Activated T-helper 2 cell treated with anti-CD3 and anti-CD28 coated beads, Interferon-gamma antibody, Interleukin-2, Interleukin-4, amounts not matched to agents 10 μg/mL and 5 μg/mL and 100 μg/mL, durations not matched to agents 14 hours and 24 hours and 36 hours (primary cell): ENCODE measurements at regions of chr1 and their contacts with region 1.

Region 1: GRCh38 chr1:53326088-53326597 is 1.7 kb downstream of the LRP8 start:
- DNase-seq: peak; percentile 94
- H3K4me3 Mint-ChIP-seq: peak overlapping the region; percentile 96
- H3K27ac Mint-ChIP-seq: peak overlapping the region; percentile 93
- H3K4me1 Mint-ChIP-seq: peaks cover 30% of the 10 kb centered on the region
- H3K27me3 Mint-ChIP-seq: no peaks in the 10 kb centered on the region

Region 2: GRCh38 chr1:52726265-52727113 is 599.7 kb before region 1 on chr1 and contains the start of gene ZYG11B:
- intact Hi-C with region 1: loop called (anchors 5 kb)
- DNase-seq: peak; percentile 87
- H3K4me3 Mint-ChIP-seq: peak within 1 kb of the TSS; percentile 93
- H3K27ac Mint-ChIP-seq: peak within 1 kb of the TSS; percentile 70
- H3K4me1 Mint-ChIP-seq: peaks cover 25% of the 10 kb centered on the region
- H3K27me3 Mint-ChIP-seq: no peaks in the 10 kb centered on the region
- total RNA-seq, gene ZYG11B: 12.7 and 13.2 TPM in 2 replicates

Region 3: DNA sequence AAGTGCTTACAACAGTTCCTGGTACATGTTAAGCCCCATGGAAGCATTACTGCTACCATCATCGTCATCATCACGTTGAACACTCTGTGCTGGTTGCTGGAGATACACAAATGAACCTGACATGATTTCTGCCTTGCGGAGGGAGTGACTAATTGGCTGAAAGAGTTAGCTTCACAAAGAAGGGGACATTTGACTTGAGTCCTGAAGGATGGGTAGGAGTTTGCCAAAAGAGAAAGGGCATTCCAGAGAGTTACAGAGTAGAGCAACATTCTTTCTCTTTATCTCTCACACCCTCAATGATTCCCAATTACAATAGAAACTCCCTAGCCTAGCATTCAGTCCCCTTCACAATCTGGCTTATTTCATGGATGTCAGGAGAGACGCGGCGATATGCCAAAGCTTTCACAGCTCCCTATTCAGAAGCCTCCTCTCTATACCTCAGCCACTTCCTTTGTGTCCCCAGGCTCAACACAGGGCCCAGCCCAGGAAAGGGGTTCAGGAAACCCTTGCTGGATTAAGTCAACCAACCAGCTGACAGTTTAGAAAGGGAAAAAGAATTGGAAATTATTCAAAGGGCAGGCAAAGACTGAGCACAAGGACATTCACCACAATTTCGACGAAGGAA is 221.7 kb before region 1 on chr1:
- intact Hi-C with region 1: no loop called
- DNase-seq: no peak
- H3K4me3 Mint-ChIP-seq: no peak overlapping the region
- H3K27ac Mint-ChIP-seq: no peak overlapping the region
- H3K4me1 Mint-ChIP-seq: peaks cover 18% of the 10 kb centered on the region
- H3K27me3 Mint-ChIP-seq: peaks cover 4% of the 10 kb centered on the region

Region 4: DNA sequence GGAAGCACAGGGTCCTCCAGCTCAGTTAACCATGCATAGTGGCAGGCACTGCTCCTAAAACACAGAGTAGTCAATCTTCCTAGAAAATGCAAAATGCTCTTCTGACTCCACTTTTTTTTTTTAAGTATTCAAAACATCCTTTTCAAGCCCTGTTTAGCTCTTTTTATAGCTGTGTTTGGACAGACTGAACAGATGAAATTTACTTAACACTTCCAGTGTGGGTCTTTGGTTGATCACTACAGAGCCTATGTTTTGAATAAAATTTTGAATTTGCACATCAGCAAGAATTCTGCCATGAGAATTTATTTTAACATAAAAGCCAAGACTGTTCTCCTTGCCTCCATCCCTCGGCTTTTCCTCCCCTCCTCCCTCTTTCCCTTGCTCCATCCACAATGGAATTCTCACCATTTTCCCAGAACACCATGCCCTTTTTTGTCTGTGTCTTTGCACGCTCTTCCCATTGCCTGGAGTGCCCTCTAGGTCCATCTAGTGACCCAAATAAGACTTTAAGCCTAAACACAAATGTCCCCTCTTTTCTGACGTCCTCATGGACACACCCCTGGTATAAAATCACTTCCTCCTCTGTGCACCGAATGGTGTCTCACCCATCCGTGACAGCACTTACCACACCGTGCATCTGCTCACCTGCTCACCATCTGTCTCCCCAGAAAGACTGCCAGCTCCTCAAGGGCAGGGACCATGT is 153.6 kb before region 1 on chr1:
- intact Hi-C with region 1: no loop called
- DNase-seq: no peak
- H3K4me3 Mint-ChIP-seq: no peak overlapping the region
- H3K27ac Mint-ChIP-seq: no peak overlapping the region
- H3K4me1 Mint-ChIP-seq: peaks cover 6% of the 10 kb centered on the region
- H3K27me3 Mint-ChIP-seq: peaks cover 21% of the 10 kb centered on the region

Region 5: DNA sequence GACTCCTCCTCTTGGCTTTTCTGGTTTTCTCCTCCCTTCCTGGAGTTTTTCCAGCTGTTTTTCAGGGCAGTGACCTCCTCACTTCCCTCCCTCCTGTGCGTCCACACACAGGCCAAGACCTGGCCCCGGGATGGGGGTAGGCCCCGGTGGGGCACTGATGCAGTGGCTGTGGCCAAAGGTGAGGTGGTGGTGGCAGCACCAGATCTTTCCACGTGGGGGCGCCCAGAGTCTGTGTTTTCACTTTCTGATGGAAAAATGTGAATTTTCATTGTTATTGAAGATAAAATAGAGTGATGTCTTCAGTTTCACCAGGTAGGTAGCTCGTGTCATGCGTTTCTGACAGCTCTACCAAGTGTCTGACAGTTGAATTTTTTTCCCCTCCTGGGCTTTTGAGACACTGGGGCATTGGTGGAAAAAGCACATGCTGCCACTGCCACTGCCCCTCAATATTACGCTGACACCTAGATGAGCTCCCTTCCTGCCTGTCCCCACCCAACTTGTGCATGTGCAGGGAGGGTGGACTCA is 47.9 kb before region 1 on chr1:
- intact Hi-C with region 1: loop called (anchors 10 kb)
- DNase-seq: peak; percentile 62
- H3K4me3 Mint-ChIP-seq: no peak overlapping the region
- H3K27ac Mint-ChIP-seq: peak overlapping the region; percentile 58
- H3K4me1 Mint-ChIP-seq: no peaks in the 10 kb centered on the region
- H3K27me3 Mint-ChIP-seq: no peaks in the 10 kb centered on the region

Region 6: GRCh38 chr1:53393325-53393792 is 67.2 kb after region 1 on chr1:
- intact Hi-C with region 1: loop called (anchors 2 kb)
- DNase-seq: peak; percentile 54
- H3K4me3 Mint-ChIP-seq: no peak overlapping the region
- H3K27ac Mint-ChIP-seq: no peak overlapping the region
- H3K4me1 Mint-ChIP-seq: no peaks in the 10 kb centered on the region
- H3K27me3 Mint-ChIP-seq: peaks cover 10% of the 10 kb centered on the region

Region 7: DNA sequence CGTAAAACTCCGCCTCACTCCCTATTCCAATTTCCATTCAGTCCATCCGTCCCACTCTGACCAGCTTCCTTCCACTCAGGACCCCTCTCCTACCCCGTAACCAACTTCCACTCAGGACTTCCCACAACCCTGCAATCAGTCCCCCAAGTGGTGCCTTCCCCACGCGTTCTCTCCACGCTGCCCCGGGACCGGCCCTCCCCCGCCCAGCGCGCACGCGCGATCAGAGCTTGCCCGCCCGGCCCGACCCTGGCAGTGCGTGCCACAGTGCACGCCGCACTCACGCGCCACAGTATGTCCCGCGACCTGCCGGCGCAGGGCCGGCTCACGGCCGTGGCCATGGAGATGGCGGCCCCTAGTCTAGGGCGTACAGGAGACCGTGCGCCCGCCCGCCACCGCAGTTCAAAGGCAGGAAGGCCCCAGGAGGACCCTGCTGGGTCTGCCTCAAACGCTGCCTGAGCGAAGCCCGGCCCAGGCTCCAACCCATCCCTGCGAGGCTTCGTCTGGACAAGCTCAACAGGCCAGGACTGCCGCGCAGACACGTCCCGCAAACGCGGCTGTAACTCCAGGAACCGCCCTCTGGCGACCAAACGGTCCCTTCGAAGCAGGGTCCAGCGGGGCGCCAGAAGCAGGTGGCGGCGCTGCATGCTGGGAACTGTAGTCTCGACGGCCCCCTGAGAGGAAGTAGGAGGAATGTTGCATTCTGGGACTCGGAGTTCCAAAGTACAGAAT is 511.9 kb after region 1 on chr1 and contains the start of gene NDC1:
- intact Hi-C with region 1: loop called (anchors 5 kb)
- DNase-seq: peak; percentile 87
- H3K4me3 Mint-ChIP-seq: peak within 1 kb of the TSS; percentile 98
- H3K27ac Mint-ChIP-seq: peak within 1 kb of the TSS; percentile 94
- H3K4me1 Mint-ChIP-seq: peaks cover 22% of the 10 kb centered on the region
- H3K27me3 Mint-ChIP-seq: no peaks in the 10 kb centered on the region
- total RNA-seq, gene NDC1: 32.4 and 33.9 TPM in 2 replicates